Ovary (tissue), 10 donors: ENCODE measurements at regions of chr1 and their contacts with region 1.

Region 1: GRCh38 chr1:89524369-89525168 is at the start of gene LRRC8B:
- DNase-seq: peak; percentile 84 to 91 (median 90)
- H3K4me3 ChIP-seq: peak within 1 kb of the TSS; percentile 46
- H3K27ac ChIP-seq: peak within 1 kb of the TSS; percentile 68 to 73
- H3K4me1 ChIP-seq: peaks cover 4% of the 10 kb centered on the region
- H3K27me3 ChIP-seq: no peaks in the 10 kb centered on the region
- CTCF ChIP-seq: no peak
- EP300 ChIP-seq: no peak
- POLR2A ChIP-seq: peak; percentile 79
- total RNA-seq, gene LRRC8B: 4.9 to 9.3 (median 6.8) TPM

Region 2: DNA sequence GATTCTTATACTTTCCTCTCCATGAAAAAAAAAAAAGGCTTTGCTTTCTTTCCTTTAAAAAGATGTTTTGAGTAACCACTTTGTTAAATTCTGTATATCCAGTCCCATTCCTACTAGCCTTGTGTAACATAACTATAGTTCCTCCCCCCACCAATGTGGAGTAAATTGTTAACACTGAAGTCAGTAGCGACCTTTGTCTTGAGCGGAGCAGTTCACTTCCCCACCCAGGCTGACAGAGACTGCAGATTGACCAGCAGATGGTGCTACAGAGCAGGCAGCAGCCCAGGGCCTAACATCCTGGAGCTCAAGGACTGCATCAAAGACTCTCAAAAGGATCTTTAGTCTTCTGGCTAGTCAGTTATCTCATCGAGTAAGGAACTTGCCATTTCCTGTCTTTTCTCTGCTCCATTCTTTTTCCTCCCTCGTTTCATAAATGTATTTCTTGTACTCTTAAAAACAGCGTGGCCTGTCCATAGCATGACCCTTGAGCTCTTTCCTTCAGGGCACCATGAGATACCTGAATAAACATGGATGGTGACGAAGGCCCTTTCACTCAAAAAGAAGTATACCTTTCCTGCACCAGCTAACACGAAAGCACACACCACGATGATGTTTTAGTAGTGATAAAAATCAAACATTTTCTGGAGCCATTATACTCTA is 1344.0 kb before region 1 on chr1:
- intact Hi-C with region 1: no loop called
- DNase-seq: peak; percentile 65 to 77 (median 71)
- H3K4me3 ChIP-seq: no peak overlapping the region
- H3K27ac ChIP-seq: no peak overlapping the region
- H3K4me1 ChIP-seq: peaks cover 2% of the 10 kb centered on the region
- H3K27me3 ChIP-seq: no peaks in the 10 kb centered on the region
- CTCF ChIP-seq: peak; percentile 71 to 78 (median 74)
- EP300 ChIP-seq: no peak
- POLR2A ChIP-seq: no peak

Region 3: DNA sequence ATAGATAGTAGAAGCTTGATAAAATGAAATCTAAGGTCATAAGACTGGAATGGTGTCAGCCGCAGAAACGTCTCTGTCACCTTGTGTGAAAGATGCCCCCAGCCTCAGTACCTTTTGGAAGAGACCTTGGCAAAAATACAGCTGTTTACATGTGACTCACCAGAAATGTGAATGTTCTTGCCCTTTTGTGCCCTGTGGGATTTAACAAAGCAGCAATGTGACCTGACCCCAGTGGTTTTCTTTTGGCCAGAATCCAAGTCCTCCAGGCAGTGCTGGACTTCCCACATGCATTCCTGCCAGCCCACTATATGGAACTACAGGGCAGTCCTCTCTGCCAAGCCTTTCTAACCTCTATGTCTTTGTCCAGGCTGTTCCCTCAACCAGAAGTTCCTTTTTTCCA is 81.1 kb after region 1 on chr1:
- intact Hi-C with region 1: loop called in 1 of 4 experiments (anchors 10 kb)
- DNase-seq: no peak
- H3K4me3 ChIP-seq: no peak overlapping the region
- H3K27ac ChIP-seq: no peak overlapping the region
- H3K4me1 ChIP-seq: peaks cover 11% of the 10 kb centered on the region
- H3K27me3 ChIP-seq: no peaks in the 10 kb centered on the region
- CTCF ChIP-seq: no peak
- EP300 ChIP-seq: no peak
- POLR2A ChIP-seq: no peak

Region 4: DNA sequence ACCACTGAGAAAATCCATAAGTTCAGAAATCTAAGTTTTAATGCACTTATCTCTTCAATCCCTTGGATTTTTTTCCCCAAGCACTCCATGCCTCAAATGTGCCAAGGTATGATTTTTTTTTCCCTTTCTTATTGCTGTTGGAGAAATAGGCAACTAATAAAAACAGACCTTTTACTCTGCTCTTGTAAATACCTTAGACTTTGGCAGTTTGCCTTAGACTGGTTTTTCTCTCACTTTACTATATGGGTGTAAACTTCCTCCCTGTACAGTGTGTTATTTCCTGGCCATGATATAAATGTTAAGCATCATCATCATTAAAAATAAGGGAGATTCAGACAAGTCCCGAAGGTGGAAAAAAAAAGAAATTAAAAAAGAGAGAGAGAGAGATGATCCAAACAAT is 174.1 kb after region 1 on chr1:
- intact Hi-C with region 1: loop called in 1 of 4 experiments (anchors 5 kb)
- DNase-seq: no peak
- H3K4me3 ChIP-seq: no peak overlapping the region
- H3K27ac ChIP-seq: no peak overlapping the region
- H3K4me1 ChIP-seq: peaks cover 2% of the 10 kb centered on the region
- H3K27me3 ChIP-seq: no peaks in the 10 kb centered on the region
- CTCF ChIP-seq: no peak
- EP300 ChIP-seq: no peak
- POLR2A ChIP-seq: no peak

Region 5: DNA sequence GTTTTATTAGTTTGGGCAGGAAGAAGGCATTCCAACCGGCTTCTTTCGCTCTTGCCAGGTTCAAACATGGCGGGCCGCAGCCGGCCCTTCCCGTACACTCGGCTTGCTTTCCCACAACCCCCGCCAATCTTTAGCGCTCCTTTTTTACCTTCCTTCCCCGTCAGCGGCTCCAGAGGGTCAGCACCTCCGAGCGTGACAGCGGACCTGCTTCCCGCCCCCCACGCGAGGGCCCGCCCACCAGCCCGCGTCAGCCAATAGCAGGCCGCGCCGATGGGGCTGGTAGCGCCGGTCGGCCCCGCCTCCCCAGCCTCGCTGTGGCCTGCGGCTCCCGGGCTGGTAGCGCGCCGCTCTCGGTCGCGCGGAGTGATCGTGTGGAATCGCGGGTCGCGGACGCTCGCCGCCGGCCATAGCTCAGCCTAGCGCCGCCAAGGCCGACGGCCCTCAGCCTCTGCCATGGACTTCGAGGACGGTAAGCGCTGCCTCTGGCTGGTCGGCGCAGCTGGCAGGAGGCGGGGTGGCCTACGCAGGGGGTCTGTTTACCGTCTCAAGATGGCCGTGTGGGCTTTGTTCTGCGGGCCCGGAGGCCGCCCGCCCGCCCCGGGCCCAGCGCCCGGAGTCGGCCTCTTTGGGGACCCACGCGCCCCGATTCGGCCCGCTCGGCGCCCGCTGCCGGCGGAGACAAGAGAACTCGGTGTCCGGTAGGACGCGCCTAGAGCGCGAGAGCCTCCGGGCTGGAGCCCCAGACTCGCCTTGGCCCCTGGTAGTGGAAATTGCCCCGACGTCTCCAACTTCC is 470.4 kb after region 1 on chr1 and contains the start of gene ZNF326:
- intact Hi-C with region 1: loop called in 1 of 4 experiments (anchors 10 kb)
- DNase-seq: peak; percentile 95 to 98 (median 97)
- H3K4me3 ChIP-seq: peak within 1 kb of the TSS; percentile 79
- H3K27ac ChIP-seq: peak within 1 kb of the TSS; percentile 94 to 96
- H3K4me1 ChIP-seq: peaks cover 1% of the 10 kb centered on the region
- H3K27me3 ChIP-seq: no peaks in the 10 kb centered on the region
- CTCF ChIP-seq: no peak
- EP300 ChIP-seq: no peak
- POLR2A ChIP-seq: peak; percentile 97
- total RNA-seq, gene ZNF326: 17.1 to 24.7 (median 21.8) TPM